Activated CD8-positive, alpha-beta T cell treated with anti-CD3 and anti-CD28 coated beads, Interleukin-2, amount 10 ng/mL, durations not matched to agents 7 days and 5 days (primary cell): ENCODE measurements at regions of chr18 and their contacts with region 1.

Region 1: GRCh38 chr18:2978646-2979045 is 34.3 kb downstream of the LPIN2 start:
- DNase-seq: no peak
- ATAC-seq: no peak
- H3K4me3 Mint-ChIP-seq: peak overlapping the region; percentile 81
- H3K27ac Mint-ChIP-seq: peak overlapping the region; percentile 80
- H3K4me1 Mint-ChIP-seq: peaks cover 73% of the 10 kb centered on the region
- H3K27me3 Mint-ChIP-seq: no peaks in the 10 kb centered on the region

Region 2: DNA sequence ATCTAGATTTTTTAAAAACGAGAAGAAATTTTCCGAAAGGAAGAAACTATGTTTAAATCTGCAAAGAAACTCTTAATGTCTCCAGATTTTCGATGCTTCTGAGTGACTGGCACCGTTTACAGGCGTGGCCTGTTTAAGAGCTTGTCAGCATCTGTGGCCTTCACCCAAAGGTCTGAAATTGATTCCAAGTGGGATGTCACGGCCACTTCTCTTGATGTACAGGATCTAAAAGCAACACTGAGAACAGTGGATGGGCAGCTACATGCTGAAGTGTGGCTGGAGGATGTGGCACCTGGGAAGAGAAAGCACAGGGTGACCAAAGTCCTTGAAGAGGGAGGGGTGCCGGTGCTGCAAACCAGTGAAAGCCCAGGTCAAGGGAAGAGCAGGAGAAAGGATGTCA is 103.9 kb before region 1 on chr18:
- CTCF ChIA-PET with region 1: no interaction called
- POLR2A ChIA-PET with region 1: no interaction called
- DNase-seq: no peak
- ATAC-seq: no peak
- H3K4me3 Mint-ChIP-seq: no peak overlapping the region
- H3K27ac Mint-ChIP-seq: no peak overlapping the region
- H3K4me1 Mint-ChIP-seq: no peaks in the 10 kb centered on the region
- H3K27me3 Mint-ChIP-seq: peaks cover 2% of the 10 kb centered on the region

Region 3: DNA sequence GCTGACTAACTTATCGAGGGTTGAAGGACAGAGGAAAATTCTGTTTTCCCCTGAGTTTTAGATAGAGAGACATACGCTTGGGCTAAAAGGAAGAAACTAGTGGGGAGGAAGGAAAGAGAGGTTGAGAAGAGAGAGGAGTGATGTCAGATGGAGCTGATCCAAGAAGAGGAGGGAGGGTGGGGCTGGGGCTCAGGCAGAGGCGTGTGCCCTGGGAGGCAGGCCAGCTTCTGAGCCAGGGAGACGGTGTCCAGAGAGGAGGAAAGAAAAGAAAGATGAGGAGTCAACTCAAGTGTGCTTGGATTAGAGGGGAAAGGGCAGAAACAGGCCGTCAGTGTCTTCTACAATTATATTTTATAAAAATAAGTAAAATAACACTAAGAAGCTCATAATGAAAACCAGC is 75.6 kb before region 1 on chr18:
- CTCF ChIA-PET with region 1: no interaction called
- POLR2A ChIA-PET with region 1: no interaction called
- DNase-seq: no peak
- ATAC-seq: no peak
- H3K4me3 Mint-ChIP-seq: no peak overlapping the region
- H3K27ac Mint-ChIP-seq: no peak overlapping the region
- H3K4me1 Mint-ChIP-seq: peaks cover 22% of the 10 kb centered on the region
- H3K27me3 Mint-ChIP-seq: no peaks in the 10 kb centered on the region

Region 4: GRCh38 chr18:2932247-2933181 is 46.1 kb before region 1 on chr18:
- CTCF ChIA-PET with region 1: interaction called, 23 read pairs
- POLR2A ChIA-PET with region 1: no interaction called
- DNase-seq: peak; percentile 75
- ATAC-seq: peak; percentile 73
- H3K4me3 Mint-ChIP-seq: no peak overlapping the region
- H3K27ac Mint-ChIP-seq: peak overlapping the region; percentile 67
- H3K4me1 Mint-ChIP-seq: peaks cover 26% of the 10 kb centered on the region
- H3K27me3 Mint-ChIP-seq: no peaks in the 10 kb centered on the region

Region 5: DNA sequence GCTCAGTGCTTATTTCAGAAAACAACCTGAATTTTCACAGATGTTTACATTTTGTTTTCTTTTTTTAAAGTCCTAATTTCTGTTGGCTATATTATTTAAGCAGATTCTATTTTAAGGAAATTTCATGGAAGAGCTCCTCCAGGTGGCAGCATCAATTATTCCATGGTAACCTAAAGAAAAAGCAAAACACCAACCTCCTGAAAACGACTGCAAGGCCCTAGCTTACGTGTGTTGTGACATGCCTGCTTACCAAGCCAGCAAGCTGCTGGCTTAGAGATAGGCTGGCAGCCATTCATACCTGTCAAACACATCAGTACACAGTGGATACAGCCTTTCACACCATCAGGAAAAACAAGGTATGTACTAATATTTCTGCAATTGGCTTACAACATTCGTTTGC is 30.6 kb before region 1 on chr18:
- CTCF ChIA-PET with region 1: interaction called, 10 read pairs
- POLR2A ChIA-PET with region 1: interaction called, 3 read pairs
- DNase-seq: no peak
- ATAC-seq: no peak
- H3K4me3 Mint-ChIP-seq: no peak overlapping the region
- H3K27ac Mint-ChIP-seq: no peak overlapping the region
- H3K4me1 Mint-ChIP-seq: peaks cover 30% of the 10 kb centered on the region
- H3K27me3 Mint-ChIP-seq: no peaks in the 10 kb centered on the region

Region 6: DNA sequence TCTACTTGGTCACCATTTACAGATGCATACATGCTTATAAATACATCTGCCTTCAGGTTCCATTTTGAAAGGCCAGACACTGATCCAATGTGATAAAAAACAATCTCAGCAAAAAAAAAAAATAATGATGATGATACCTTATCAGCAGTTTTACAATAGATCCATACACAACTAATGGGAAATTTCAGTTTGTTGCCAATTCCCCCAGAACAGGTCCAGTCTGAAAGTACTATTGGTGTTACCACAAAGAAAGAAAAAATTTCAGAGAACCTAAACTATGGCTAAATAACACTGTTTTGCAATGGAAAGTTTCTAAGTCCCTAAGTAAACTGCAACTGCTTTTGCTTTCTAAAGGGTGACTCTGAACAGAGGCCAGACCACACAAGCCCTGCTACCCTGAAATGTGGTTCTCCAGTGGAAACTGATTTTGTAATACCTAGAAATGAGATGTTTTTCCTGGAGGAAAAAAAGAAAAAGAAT is 19.8 kb before region 1 on chr18:
- CTCF ChIA-PET with region 1: interaction called, 92 read pairs
- POLR2A ChIA-PET with region 1: interaction called, 98 read pairs
- DNase-seq: peak; percentile 78
- ATAC-seq: peak; percentile 56
- H3K4me3 Mint-ChIP-seq: peak overlapping the region; percentile 72
- H3K27ac Mint-ChIP-seq: peak overlapping the region; percentile 95
- H3K4me1 Mint-ChIP-seq: peaks cover 89% of the 10 kb centered on the region
- H3K27me3 Mint-ChIP-seq: no peaks in the 10 kb centered on the region